ENCODE measurements at regions of chr15 and their contacts with region 1.

Region 1: DNA sequence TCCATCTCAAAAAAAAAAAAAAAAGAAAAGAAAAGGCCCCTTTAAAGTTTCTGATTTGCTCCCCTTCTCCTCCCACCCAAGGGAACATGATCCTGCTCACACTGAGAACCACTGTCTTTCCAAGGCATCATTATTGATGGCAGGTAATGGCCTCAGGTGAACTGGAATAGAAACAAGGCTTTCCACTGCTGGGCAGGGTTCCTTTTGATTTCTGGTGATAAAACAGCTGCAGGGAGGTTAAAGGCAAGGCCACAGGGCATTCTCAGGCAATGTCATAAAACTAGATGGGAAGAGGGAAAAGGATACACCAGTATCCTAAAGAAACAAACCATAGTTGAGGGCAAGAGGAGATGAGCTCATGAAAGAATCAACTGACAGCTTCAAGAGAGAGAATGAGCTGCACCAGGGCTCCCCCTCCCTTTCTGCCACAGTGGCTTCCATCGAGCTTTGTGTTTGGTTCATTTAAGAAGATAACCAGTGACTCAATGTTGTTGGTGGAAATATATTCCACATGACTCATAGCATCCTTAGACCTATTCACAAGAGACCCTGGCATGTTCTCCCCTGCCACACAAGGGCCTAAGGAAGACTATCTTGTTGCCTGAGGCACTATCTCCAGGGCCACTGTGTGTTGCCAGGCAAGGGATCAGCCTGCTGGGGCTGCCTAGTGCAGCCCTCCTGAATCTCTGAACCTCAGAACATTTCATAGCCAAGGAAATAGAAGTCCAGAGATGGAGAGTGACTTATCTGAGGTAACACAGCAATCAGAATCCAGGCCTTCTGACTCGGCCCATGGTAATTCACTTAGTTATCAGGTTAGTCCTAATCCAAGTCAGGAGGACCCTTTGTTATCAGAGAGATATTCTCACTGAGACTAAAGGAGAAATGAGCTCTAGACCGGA is 86.5 kb downstream of the WDR76 start:
- DNase-seq: no peak
- H3K4me3 ChIP-seq: no peak overlapping the region
- H3K27ac ChIP-seq: peak overlapping the region; percentile 71
- H3K4me1 ChIP-seq: peaks cover 46% of the 10 kb centered on the region
- H3K27me3 ChIP-seq: no peaks in the 10 kb centered on the region
- CTCF ChIP-seq: no peak

Region 2: GRCh38 chr15:44033894-44034293 is 120.6 kb after region 1 on chr15:
- intact Hi-C with region 1: loop called (anchors 10 kb)
- DNase-seq: no peak
- H3K4me3 ChIP-seq: no peak overlapping the region
- H3K27ac ChIP-seq: no peak overlapping the region
- H3K4me1 ChIP-seq: peaks cover 31% of the 10 kb centered on the region
- H3K27me3 ChIP-seq: peaks cover 5% of the 10 kb centered on the region
- CTCF ChIP-seq: no peak

Region 3: GRCh38 chr15:44066316-44066740 is 153.1 kb after region 1 on chr15:
- intact Hi-C with region 1: loop called (anchors 5 kb)
- DNase-seq: no peak
- H3K4me3 ChIP-seq: no peak overlapping the region
- H3K27ac ChIP-seq: no peak overlapping the region
- H3K4me1 ChIP-seq: no peaks in the 10 kb centered on the region
- H3K27me3 ChIP-seq: no peaks in the 10 kb centered on the region
- CTCF ChIP-seq: peak; percentile 74

Region 4: GRCh38 chr15:44092221-44092620 is 178.9 kb after region 1 on chr15:
- intact Hi-C with region 1: no loop called
- DNase-seq: no peak
- H3K4me3 ChIP-seq: no peak overlapping the region
- H3K27ac ChIP-seq: no peak overlapping the region
- H3K4me1 ChIP-seq: no peaks in the 10 kb centered on the region
- H3K27me3 ChIP-seq: no peaks in the 10 kb centered on the region
- CTCF ChIP-seq: no peak